ENCODE measurements at regions of chr1 and their contacts with region 1.

Region 1: DNA sequence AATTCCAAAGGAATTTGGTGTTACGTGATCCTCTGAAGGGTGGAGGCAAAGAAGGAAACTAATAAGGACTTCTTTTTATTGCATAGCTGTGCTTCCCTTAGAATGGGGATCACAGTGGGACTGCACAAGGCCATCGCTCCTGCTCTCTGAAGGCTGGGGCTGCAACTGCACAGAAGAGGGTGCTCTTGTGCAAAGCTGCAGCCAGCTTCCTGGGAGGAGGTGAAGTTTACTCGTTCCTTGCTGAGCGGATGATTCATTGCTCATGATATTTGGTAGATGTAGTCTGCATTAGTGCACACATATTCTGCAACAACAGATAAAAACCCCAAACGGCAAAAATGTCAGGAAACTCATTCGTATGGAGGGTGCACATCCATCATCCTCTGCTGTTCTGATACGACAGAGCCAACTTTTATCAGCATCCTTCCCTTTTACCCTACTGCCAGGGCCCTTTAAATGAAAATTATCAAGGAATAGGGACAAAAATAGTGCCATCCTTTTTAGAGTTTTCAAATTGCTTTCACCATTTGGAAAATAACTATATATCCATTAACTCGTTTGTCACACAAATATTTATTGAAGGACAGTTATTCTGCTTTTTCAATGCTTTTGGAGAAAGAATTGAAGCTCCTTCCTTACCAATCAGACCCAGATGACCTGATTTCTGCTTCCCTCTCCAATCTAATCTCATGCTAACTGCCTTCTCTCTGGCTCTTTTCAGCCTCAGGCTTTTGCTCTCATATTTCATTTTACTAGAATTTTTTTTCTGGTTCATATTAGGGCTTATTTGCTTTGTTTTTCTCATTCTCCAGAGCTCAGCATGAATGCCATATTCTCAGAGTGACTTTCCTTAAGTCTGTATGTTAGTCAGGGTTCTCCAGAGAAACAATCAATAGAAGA is 263.6 kb downstream of the DUSP10 start:
- DNase-seq: peak in 34 of 35 experiments; percentile 5 to 66 (median 35)
- ATAC-seq: peak; percentile 76 to 94 (median 86)
- H3K4me3 ChIP-seq: no peak overlapping the region
- H3K4me3 Mint-ChIP-seq: no peak overlapping the region
- H3K27ac ChIP-seq: no peak overlapping the region
- H3K27ac Mint-ChIP-seq: no peak overlapping the region
- H3K4me1 ChIP-seq: no peaks in the 10 kb centered on the region
- H3K4me1 Mint-ChIP-seq: peaks cover 0 to 4% (median 4%) of the 10 kb centered on the region in 3 donors
- H3K27me3 ChIP-seq: no peaks in the 10 kb centered on the region
- H3K27me3 Mint-ChIP-seq: peaks cover 4% of the 10 kb centered on the region in 2 donors

Region 2: GRCh38 chr1:221806984-221807383 is 328.7 kb after region 1 on chr1:
- CTCF ChIA-PET with region 1: no interaction called
- POLR2A ChIA-PET with region 1: no interaction called
- DNase-seq: no peak
- ATAC-seq: no peak
- H3K4me3 ChIP-seq: no peak overlapping the region
- H3K4me3 Mint-ChIP-seq: no peak overlapping the region
- H3K27ac ChIP-seq: no peak overlapping the region
- H3K27ac Mint-ChIP-seq: no peak overlapping the region
- H3K4me1 ChIP-seq: peaks cover 2 to 8% of the 10 kb centered on the region in 2 experiments
- H3K4me1 Mint-ChIP-seq: peaks cover 29 to 42% (median 30%) of the 10 kb centered on the region in 3 donors
- H3K27me3 ChIP-seq: no peaks in the 10 kb centered on the region
- H3K27me3 Mint-ChIP-seq: no peaks in the 10 kb centered on the region

Region 3: DNA sequence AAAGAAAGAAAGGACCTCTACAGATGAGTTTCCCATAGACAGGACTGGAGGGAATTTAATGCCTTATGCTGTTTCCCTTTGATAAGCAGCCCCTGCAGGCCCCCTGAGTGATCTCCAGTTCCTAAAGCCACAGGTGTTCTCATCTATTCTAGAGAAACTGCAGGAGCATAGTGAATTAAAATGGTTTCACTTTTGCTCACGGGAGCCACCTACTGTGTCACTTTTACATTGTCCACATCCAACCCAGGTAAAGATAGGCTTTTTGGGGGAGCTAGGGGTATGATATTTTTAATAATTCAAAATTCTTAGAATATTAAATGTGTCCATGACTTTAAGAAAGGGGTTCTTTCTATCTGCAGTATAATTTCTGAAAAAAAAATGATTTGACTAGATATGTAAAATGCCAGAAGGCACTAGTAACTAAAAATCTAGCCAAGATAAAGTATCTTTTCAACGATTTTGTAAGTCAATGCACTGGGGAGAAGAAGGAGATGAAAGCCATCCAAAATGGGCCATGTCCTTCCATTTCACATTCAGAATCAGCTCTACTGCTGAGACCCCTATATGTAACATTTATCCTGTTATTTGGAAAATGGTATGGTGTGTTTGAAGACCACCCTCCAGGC is 530.9 kb after region 1 on chr1:
- CTCF ChIA-PET with region 1: interaction called, 4 to 15 read pairs
- POLR2A ChIA-PET with region 1: no interaction called
- DNase-seq: peak in 23 of 35 experiments; percentile 1 to 60 (median 9)
- ATAC-seq: peak; percentile 36 to 62 (median 56)
- H3K4me3 ChIP-seq: no peak overlapping the region
- H3K4me3 Mint-ChIP-seq: peak overlapping the region in 2 of 3 donors; percentile 17 to 42
- H3K27ac ChIP-seq: no peak overlapping the region
- H3K27ac Mint-ChIP-seq: no peak overlapping the region
- H3K4me1 ChIP-seq: no peaks in the 10 kb centered on the region
- H3K4me1 Mint-ChIP-seq: peaks cover 0 to 4% (median 2%) of the 10 kb centered on the region in 3 donors
- H3K27me3 ChIP-seq: peaks cover 0 to 6% of the 10 kb centered on the region in 2 experiments
- H3K27me3 Mint-ChIP-seq: peaks cover 0 to 2% of the 10 kb centered on the region in 2 donors

Measured in T-cell (primary cell).